ENCODE measurements at regions of chr17 and their contacts with region 1.

Region 1: DNA sequence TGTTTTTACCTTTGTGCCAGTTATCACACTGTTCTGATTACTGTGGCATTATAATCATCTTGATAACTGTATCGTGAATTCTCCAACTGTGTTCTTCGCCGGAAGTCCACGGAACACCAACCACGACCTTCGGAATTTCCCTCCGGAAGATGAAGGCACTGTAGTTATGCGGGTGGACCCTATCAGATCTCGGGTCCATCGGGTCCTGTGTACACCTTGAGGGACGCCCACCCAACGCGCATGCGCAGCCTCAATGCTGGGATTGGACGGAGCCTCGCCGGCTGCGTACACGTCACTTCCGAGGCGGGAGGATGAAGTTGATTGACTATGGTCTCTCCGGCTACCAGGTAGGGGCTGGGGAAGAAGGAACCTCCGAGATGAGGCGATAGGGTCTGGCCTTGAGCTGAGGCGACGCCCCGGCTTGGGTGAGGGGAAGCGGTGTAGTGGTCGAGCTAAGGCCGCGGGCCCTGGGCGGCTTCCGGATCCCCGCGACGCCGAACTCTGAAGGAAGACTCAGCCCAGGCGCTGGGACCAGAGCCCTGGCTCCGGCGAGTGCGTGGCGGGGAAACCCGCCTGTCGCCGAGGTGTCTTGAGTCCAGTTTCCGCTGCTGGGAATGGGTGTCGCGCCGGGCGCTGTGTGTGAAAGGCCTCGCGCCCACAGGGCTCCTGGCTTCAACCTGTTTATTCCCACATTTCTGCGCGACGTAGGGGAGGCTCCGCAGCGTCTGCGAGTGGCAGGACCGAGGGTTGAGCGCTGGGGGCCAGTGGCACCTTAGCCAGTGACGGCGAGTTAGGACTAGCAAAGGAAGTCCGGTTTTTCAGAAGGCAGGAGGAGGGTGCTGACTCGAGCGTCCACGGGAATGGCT is at the start of gene DHRS7B:
- DNase-seq: peak; percentile 94

Region 2: DNA sequence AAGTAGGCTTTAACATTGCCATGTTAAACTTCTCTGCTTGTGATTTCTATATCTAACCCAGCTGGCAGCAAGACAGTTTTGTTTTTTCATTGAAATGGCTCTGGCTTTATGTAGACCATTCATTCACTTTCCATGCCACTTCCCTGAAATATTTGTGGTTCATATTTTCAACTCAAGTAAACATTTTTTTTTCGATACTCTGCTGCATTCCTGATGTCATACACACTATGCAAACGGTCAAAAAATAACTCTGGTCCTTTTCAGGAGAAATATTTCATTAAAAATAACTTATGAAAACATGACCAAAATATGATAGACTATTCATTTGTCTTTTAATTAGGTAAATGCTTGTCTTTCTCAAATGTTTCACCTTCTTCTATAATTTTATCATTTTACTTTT is 200.3 kb before region 1 on chr17:
- in situ Hi-C with region 1: no loop called
- DNase-seq: no peak

Region 3: DNA sequence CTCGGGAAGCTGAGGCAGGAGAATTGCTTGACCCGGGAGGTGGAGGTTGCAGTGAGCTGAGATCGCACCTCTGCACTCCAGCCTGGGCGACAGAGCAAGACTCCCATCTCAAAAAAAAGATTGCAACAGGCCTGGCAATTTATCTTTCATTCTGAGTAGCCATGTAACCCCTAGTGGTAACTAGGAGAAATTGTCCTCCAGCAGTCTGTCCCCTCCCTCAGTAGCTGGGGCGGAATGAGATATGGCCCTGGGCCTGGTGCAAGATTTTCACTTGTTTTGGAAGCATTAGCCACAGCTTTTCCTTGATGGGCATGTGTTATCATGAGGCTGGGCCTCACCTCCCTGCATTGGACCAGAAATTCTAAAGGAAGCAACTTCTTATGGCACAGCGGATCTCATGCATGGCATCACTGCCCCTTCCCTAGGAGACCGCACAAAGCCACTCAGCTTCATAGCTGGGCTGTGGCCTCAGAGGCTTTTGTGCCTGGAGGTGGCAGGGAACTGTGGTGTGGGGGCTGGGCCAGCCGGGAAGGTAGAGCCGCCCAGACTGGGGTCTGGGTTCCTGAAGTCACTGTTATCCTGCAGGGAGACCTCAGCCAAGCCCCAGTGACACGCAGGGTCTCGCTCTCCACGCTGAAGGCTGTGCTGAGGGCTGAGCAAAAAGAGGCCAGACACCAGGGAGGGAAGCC is 112.9 kb after region 1 on chr17:
- in situ Hi-C with region 1: loop called (anchors 25 kb)
- DNase-seq: peak; percentile 31

Region 4: DNA sequence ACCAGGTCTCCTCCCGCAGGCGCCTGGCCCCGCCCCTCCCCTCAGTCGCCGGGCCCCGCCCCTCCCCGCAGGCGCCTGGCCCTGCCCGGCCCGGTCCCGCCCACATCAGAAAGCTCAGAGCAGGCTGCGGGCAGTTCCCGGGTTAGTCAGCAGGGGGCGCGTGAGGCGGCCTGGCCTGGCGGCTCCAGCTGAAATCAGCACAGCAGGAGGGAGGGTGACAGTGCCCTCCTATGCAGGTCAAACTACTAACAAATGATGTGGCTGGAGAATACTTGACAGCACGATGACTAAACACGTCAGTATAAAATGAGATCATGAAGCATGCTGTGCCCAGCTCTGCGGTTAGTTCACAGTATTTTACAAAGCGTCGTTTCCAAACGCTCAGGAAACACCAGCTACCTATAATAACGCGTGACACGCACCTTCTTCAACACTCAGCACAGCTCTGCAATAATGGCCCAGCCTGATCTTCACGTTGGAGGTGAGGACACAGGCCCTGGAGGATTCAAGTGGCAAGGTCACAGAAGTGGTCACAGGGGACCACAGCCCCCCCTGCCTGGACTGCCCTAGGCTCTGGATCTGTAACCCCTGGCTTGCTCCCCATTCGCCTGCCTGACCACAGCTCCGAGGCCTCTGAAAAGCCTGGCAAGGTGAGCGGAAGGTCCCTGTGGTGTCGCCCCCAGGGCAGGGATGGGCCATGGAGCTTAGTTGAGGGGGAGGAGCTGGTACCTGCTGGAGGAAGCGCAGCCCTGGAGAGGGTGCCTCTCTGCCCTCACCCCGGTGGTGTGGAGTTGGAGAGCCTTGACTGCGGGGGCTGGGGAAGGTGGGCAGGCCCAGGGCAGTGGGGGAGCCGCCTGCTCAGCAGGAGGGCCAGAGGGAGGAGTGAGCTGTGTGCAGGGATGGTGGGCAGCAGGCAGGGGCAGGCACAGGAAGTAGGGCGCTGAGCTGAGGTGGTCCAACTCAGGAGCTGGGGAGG is 330.5 kb after region 1 on chr17:
- in situ Hi-C with region 1: loop called (anchors 25 kb)
- DNase-seq: peak; percentile 89